ENCODE measurements at regions of chr5 and their contacts with region 1.

Region 1: GRCh38 chr5:32522429-32523143 is 62.8 kb upstream of the SUB1 start:
- DNase-seq: no peak
- H3K4me3 ChIP-seq: no peak overlapping the region
- H3K27ac ChIP-seq: no peak overlapping the region
- H3K4me1 ChIP-seq: no peaks in the 10 kb centered on the region
- H3K27me3 ChIP-seq: no peaks in the 10 kb centered on the region
- CTCF ChIP-seq: no peak
- EP300 ChIP-seq: no peak
- POLR2A ChIP-seq: no peak
- RAD21 ChIP-seq: no peak

Region 2: GRCh38 chr5:32458880-32459495 is 63.6 kb before region 1 on chr5:
- CTCF ChIA-PET with region 1: no interaction called
- POLR2A ChIA-PET with region 1: no interaction called
- DNase-seq: no peak
- H3K4me3 ChIP-seq: no peak overlapping the region
- H3K27ac ChIP-seq: no peak overlapping the region
- H3K4me1 ChIP-seq: no peaks in the 10 kb centered on the region
- H3K27me3 ChIP-seq: no peaks in the 10 kb centered on the region
- CTCF ChIP-seq: no peak
- EP300 ChIP-seq: no peak
- POLR2A ChIP-seq: no peak
- RAD21 ChIP-seq: no peak

Region 3: GRCh38 chr5:32498484-32498883 is 24.1 kb before region 1 on chr5:
- CTCF ChIA-PET with region 1: interaction called, 13 read pairs
- POLR2A ChIA-PET with region 1: interaction called, 3 read pairs
- DNase-seq: no peak
- H3K4me3 ChIP-seq: no peak overlapping the region
- H3K27ac ChIP-seq: no peak overlapping the region
- H3K4me1 ChIP-seq: peaks cover 7 to 12% (median 10%) of the 10 kb centered on the region in 4 experiments; a peak in 6 of 7 replicates
- H3K27me3 ChIP-seq: peaks cover 0 to 18% (median 12%) of the 10 kb centered on the region in 4 experiments; a peak in 4 of 7 replicates
- CTCF ChIP-seq: no peak
- EP300 ChIP-seq: no peak
- POLR2A ChIP-seq: no peak
- RAD21 ChIP-seq: no peak

Region 4: DNA sequence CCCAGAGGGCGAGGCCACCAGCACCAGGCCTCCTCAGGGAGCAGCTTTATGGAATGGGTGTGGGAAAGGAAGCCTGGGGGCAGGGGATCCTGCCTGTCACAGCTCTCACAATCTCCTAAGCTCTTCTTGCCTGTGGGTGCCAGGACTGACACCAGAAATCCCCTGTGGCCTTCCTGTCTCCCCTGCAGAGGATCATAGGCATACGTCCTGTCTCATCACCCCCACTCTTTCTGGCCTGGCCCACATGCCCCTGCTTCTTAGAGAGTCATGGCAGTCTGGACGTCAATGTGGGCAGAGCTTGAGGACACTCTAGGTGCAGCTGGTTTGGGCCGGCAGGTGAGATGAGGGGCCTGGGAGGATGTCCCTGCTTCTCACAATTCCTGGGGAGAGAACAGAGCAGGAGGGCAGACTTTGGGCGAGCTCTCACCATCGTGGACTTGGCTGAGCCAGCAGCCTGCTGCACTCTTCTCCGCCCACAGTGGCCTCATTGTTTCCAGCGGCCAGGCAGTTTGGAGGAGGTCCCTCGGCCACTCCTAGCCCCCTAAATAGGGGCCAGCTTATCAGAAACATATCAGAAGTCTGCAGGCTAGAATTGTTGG is 10.7 kb before region 1 on chr5:
- CTCF ChIA-PET with region 1: interaction called, 22 read pairs
- POLR2A ChIA-PET with region 1: no interaction called
- DNase-seq: no peak
- H3K4me3 ChIP-seq: no peak overlapping the region
- H3K27ac ChIP-seq: no peak overlapping the region
- H3K4me1 ChIP-seq: 0 out of 7 replicates have a peak, but pooled peaks cover 0 to 2% (median 0%) of the 10 kb centered on the region in 4 experiments
- H3K27me3 ChIP-seq: no peaks in the 10 kb centered on the region
- CTCF ChIP-seq: no peak
- EP300 ChIP-seq: no peak
- POLR2A ChIP-seq: no peak
- RAD21 ChIP-seq: no peak

Region 5: DNA sequence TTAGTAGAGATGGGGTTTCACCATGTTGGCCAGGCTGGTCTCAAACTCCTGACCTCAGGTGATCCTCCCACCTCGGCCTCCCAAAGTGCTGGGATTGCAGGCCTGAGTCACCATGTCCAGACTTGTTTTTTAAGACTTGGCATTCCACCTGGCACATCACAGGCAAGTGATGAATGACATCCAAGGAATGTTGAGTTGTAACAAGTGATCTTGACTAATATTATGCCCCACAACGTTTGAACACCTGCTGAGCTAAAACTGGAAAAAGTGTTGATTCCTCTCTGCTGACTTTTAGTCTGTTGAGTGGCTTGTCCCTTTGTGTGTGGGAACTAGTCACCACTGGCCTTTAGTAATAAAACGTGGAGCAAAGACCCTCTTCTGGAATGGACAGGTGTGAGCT is 117.4 kb after region 1 on chr5:
- CTCF ChIA-PET with region 1: no interaction called
- POLR2A ChIA-PET with region 1: no interaction called
- DNase-seq: no peak
- H3K4me3 ChIP-seq: no peak overlapping the region
- H3K27ac ChIP-seq: no peak overlapping the region
- H3K4me1 ChIP-seq: no peaks in the 10 kb centered on the region
- H3K27me3 ChIP-seq: no peaks in the 10 kb centered on the region
- CTCF ChIP-seq: no peak
- EP300 ChIP-seq: no peak
- POLR2A ChIP-seq: no peak
- RAD21 ChIP-seq: no peak